ENCODE measurements at regions of chr15 and their contacts with region 1.

Region 1: GRCh38 chr15:43268111-43269105 is 1.7 kb upstream of the TGM5 start:
- DNase-seq: no peak
- H3K4me3 Mint-ChIP-seq: no peak overlapping the region
- H3K27ac Mint-ChIP-seq: no peak overlapping the region
- H3K4me1 Mint-ChIP-seq: peaks cover 4% of the 10 kb centered on the region
- H3K27me3 Mint-ChIP-seq: peaks cover 23% of the 10 kb centered on the region

Region 2: DNA sequence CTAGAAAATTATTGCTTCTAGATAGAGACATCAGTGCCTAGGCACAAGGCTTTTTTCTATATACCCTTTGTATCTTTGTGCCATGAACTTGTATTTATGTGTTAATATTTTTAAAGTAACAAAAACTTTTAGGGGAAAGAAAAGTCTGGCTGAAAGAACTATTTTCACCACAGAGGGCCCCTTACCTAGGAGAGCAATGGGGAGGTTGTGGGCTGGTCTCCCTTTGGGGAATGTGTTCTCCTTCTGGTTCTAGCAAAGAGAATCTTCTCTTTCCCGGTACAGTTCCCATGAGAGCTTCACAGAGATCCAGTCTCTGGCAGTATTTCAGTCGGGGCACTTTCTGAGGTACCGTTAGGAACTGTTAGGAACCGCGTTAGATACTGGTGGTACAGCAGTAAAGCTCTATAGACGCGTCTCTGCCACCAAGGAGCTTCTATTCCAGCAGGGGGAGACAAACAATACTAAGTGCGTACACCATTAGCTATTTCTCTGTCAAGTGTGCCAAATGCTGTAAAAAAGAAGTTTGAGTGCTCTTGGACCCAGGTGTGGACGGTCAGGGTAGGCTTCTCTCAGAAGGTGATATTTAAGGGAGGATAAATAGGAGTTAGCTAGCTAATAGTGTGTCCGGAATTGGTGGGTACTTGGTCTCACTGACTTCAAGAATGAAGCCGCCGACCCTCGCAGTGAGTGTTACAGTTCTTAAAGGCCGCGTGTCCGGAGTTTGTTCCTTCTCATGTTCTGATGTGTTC is 43.0 kb before region 1 on chr15:
- intact Hi-C with region 1: loop called (anchors 1 kb)
- DNase-seq: peak; percentile 36
- H3K4me3 Mint-ChIP-seq: no peak overlapping the region
- H3K27ac Mint-ChIP-seq: no peak overlapping the region
- H3K4me1 Mint-ChIP-seq: peaks cover 8% of the 10 kb centered on the region
- H3K27me3 Mint-ChIP-seq: peaks cover 16% of the 10 kb centered on the region